Activated CD4-positive, alpha-beta memory T cell treated with anti-CD3 and anti-CD28 coated beads, Interleukin-2, amount 10 ng/mL, durations not matched to agents 7 days and 5 days (primary cell): ENCODE measurements at regions of chr21 and their contacts with region 1.

Region 1: DNA sequence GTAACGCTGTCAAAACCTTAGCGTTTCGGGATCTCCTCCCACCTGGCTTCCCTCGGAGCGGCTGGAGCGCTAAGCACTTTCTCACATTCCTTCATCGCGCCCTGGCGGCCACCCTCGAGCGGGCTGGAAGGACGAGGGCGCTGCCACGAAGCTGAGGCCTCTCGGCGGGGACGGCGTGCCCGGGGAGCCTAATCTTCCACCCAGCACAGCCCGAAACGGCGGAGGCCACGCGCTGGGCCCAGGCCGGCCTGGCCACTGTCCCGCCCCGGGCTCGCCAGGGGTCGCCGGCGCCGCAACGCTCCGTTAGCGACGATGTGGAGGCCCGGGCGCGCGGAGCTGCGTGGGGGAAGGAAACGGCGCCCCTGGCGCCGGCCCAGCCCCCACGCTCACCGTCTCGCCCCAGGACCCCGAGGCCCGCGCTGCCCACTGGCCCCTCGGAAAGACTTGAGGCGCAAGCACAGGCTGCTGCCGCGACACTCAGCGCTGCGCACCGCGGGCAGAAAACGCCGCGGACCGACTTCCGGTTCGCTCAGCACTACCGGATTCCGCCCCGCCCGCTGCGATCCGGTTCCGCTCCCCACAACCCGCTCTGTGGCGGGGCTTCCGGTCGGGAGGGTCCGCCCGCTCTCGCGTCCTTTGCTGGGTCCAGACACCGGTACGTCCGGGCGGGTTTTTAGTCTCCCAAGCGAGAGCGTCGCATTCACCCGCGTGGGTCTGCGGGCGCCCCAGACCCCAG is at the start of gene YBEY:
- DNase-seq: peak; percentile 91
- H3K4me3 Mint-ChIP-seq: peak within 1 kb of the TSS; percentile 97
- H3K27ac Mint-ChIP-seq: peak within 1 kb of the TSS; percentile 96
- H3K4me1 Mint-ChIP-seq: peaks cover 61% of the 10 kb centered on the region
- H3K27me3 Mint-ChIP-seq: no peaks in the 10 kb centered on the region
- total RNA-seq, gene YBEY: 10.8 to 12.1 TPM

Region 2: GRCh38 chr21:46144464-46145070 is 141.4 kb before region 1 on chr21:
- CTCF ChIA-PET with region 1: interaction called, 13 read pairs
- POLR2A ChIA-PET with region 1: interaction called, 4 read pairs
- DNase-seq: no peak
- H3K4me3 Mint-ChIP-seq: no peak overlapping the region
- H3K27ac Mint-ChIP-seq: no peak overlapping the region
- H3K4me1 Mint-ChIP-seq: peaks cover 14% of the 10 kb centered on the region
- H3K27me3 Mint-ChIP-seq: no peaks in the 10 kb centered on the region

Region 3: DNA sequence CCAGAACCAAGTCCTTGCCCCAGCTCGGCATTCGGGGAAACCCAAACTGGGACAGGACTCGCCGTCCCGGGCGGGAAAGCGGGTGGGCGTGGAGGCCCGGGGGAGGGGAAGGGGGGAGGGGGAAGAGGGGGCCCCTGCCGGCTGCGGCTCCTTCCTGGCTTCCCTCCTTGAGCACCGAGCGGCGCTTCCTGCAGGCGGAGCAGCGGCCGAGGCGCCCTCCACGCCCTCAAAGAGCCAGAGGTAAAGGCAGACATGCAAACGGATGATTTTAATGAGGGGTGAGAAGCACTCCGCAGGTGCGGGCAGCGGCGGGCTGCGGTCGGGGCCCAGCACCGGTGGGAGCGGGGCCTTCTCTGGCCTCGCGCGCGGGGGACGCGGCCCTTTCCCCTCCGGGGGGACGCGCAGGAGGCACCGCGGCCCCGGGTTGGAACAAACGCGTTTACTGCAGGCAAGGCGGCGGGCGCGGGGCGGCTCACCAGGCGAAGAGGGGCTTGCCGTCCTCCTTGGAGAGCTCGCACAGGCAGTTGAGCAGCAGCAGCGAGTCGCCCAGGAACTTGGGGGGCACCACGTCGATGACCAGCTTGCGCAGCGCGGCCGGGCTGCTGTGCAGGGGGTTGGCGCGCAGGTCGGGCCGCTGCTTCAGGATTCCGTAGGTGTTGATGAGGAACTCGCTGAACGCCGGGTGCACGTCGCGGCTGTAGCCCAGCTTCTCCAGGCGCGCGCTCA is 124.9 kb before region 1 on chr21:
- CTCF ChIA-PET with region 1: no interaction called
- POLR2A ChIA-PET with region 1: no interaction called
- DNase-seq: peak; percentile 15
- H3K4me3 Mint-ChIP-seq: no peak overlapping the region
- H3K27ac Mint-ChIP-seq: no peak overlapping the region
- H3K4me1 Mint-ChIP-seq: no peaks in the 10 kb centered on the region
- H3K27me3 Mint-ChIP-seq: peaks cover 6% of the 10 kb centered on the region

Region 4: GRCh38 chr21:46210378-46211136 is 75.4 kb before region 1 on chr21:
- CTCF ChIA-PET with region 1: no interaction called
- POLR2A ChIA-PET with region 1: no interaction called
- DNase-seq: no peak
- H3K4me3 Mint-ChIP-seq: no peak overlapping the region
- H3K27ac Mint-ChIP-seq: no peak overlapping the region
- H3K4me1 Mint-ChIP-seq: no peaks in the 10 kb centered on the region
- H3K27me3 Mint-ChIP-seq: no peaks in the 10 kb centered on the region

Region 5: GRCh38 chr21:46295996-46296752 is 10.2 kb after region 1 on chr21:
- CTCF ChIA-PET with region 1: no interaction called
- POLR2A ChIA-PET with region 1: interaction called, 19 read pairs
- DNase-seq: peak; percentile 81
- H3K4me3 Mint-ChIP-seq: peak overlapping the region; percentile 64
- H3K27ac Mint-ChIP-seq: peak overlapping the region; percentile 73
- H3K4me1 Mint-ChIP-seq: peaks cover 28% of the 10 kb centered on the region
- H3K27me3 Mint-ChIP-seq: no peaks in the 10 kb centered on the region